Activated naive CD8-positive, alpha-beta T cell treated with anti-CD3 and anti-CD28 coated beads, Interleukin-2, amount 10 ng/mL, durations not matched to agents 7 days and 5 days (primary cell): ENCODE measurements at regions of chr17 and their contacts with region 1.

Region 1: GRCh38 chr17:63931099-63931561 is 1.0 kb downstream of the CD79B start:
- DNase-seq: peak; percentile 76
- ATAC-seq: peak; percentile 72
- H3K4me3 Mint-ChIP-seq: peak overlapping the region; percentile 94
- H3K27ac Mint-ChIP-seq: peak overlapping the region; percentile 94
- H3K4me1 Mint-ChIP-seq: peaks cover 16% of the 10 kb centered on the region
- H3K27me3 Mint-ChIP-seq: peaks cover 6% of the 10 kb centered on the region

Region 2: DNA sequence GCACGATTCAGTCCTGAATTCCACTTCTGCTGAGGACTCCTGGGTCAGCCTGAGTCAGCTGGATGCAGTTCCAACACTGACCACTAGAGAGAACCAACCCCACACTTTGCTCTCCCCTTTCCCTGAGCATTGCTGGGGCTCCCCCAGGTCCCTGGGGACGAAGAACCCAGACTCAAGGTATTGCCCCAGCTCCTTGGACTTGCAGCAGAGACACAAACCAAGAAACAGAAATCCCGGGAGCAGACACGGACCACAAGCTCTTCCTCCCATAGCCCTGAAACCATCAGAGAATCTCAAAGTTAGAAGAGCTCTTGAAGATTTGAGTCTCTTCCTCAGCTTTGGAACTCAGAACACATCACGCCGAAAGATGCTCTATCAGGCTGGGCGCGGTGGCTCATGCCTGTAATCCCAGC is 11.8 kb before region 1 on chr17:
- POLR2A ChIA-PET with region 1: no interaction called
- DNase-seq: peak; percentile 64
- ATAC-seq: peak; percentile 91
- H3K4me3 Mint-ChIP-seq: no peak overlapping the region
- H3K27ac Mint-ChIP-seq: no peak overlapping the region
- H3K4me1 Mint-ChIP-seq: peaks cover 5% of the 10 kb centered on the region
- H3K27me3 Mint-ChIP-seq: peaks cover 8% of the 10 kb centered on the region

Region 3: DNA sequence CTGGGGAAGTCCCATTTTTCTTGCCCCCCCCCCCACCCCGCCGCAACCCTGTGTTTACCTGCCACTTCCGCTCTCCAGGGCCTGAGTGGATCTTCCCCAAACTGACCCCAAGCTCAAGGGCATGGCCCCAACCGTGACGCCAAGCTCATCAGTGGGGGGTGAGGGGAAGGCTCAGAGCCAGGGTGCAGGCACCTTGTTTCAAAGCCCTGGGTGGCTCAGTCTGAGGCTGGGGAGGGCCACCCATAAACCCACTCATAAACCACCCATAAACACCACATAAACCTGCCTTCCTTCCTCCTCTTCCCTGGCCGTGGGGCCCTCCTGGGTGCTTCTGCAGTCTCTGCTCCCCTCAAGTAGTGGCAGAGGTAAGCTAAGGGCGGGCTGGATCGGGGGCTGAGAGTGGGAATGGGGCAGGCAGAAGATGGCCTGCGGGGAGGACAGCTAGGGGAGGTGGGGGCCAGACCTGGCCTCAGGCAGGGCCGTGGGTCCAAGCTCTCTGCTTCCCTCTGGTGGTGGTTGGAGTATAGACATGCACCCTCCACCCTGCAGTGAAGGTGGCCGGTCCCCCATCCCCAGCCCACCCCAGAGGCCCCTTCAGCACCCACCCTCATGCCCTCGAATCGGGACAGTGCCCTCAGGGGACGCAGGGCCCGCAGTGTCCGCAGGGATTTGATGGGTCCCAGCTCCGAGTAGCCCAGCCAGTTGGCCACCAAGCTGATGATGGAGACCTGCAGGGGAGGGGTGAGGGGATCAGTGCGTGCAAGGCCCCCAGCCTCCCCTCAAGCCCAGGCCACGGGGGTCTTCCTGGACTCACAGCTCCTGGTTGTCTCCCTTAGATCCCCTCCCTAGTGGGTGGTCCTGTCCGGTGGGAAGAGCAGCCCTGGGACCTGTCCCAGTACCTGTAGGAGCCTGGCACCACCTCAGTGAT is 15.6 kb after region 1 on chr17:
- POLR2A ChIA-PET with region 1: interaction called, 10 read pairs
- DNase-seq: peak; percentile 72
- ATAC-seq: peak; percentile 89
- H3K4me3 Mint-ChIP-seq: peak overlapping the region; percentile 83
- H3K27ac Mint-ChIP-seq: peak overlapping the region; percentile 78
- H3K4me1 Mint-ChIP-seq: peaks cover 7% of the 10 kb centered on the region
- H3K27me3 Mint-ChIP-seq: peaks cover 17% of the 10 kb centered on the region

Region 4: GRCh38 chr17:64158831-64159590 is 227.9 kb after region 1 on chr17:
- POLR2A ChIA-PET with region 1: no interaction called
- DNase-seq: no peak
- ATAC-seq: no peak
- H3K4me3 Mint-ChIP-seq: no peak overlapping the region
- H3K27ac Mint-ChIP-seq: no peak overlapping the region
- H3K4me1 Mint-ChIP-seq: no peaks in the 10 kb centered on the region
- H3K27me3 Mint-ChIP-seq: no peaks in the 10 kb centered on the region